Thyroid gland (tissue), 4 donors: ENCODE measurements at regions of chr19 and their contacts with region 1.

Region 1: DNA sequence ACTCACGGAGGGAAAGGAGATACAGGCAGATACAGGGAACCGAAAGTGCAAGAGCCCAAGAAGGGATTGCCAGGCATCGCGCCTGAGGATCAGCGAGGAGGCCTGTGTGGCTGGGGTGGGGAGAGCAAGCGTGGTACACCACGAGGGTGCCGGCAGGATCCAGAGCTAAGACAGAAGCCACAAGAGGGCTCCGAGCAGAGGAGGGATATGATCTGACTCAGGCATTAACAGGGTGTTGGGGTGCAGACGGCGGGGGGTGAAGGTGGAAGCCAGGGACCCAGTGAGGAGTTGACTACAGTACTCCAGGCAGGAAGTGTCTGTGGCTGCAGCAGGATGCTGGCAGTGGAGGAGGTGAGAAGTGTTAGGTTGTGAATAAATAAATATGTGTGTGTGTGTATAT is 5.4 kb upstream of the PPP1R37 start:
- DNase-seq: no peak
- H3K4me3 ChIP-seq: no peak overlapping the region
- H3K27ac ChIP-seq: no peak overlapping the region
- H3K4me1 ChIP-seq: peaks cover 5 to 7% of the 10 kb centered on the region in 2 donors
- H3K27me3 ChIP-seq: no peaks in the 10 kb centered on the region
- CTCF ChIP-seq: no peak
- POLR2A ChIP-seq: no peak

Region 2: DNA sequence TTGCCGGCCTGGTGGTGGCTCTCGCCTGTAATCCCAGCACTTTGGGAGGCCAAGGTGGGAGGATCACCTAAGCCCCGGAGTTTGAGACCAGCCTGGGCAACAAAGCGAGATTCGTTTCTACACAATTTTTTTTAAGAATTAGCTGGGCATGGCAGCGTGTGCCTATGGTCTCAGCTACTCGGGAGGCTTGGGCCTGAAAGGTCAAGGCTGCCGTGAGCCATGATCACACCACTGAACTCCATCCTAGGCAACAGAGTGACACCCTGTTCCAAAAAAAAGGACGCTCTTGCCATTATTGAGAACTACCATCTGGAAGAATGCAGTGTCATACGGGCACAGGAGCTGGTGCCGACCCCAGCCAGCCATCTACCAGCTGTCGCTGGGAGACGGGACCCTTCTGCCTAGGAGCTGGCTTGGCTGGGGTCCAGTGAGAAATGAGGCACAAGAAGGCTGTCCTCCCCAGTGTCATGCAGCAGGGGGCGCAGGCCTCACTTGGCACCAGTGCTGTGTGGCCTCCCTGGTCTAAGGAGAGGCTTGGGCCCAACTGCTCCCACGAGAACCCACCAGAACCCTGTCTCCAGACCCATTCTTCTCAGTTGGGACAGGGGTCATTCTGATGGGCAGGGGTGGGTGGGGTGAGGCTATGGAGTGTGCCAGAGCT is 98.5 kb before region 1 on chr19:
- intact Hi-C with region 1: no loop called
- DNase-seq: peak; percentile 45 to 57
- H3K4me3 ChIP-seq: no peak overlapping the region
- H3K27ac ChIP-seq: no peak overlapping the region
- H3K4me1 ChIP-seq: no peaks in the 10 kb centered on the region
- H3K27me3 ChIP-seq: no peaks in the 10 kb centered on the region
- CTCF ChIP-seq: peak in 4 of 6 experiments; percentile 11 to 46 (median 36)
- POLR2A ChIP-seq: no peak

Region 3: GRCh38 chr19:45038931-45039893 is 48.3 kb before region 1 on chr19 and contains the start of gene CLASRP:
- intact Hi-C with region 1: no loop called
- DNase-seq: peak; percentile 89 to 90
- H3K4me3 ChIP-seq: peak within 1 kb of the TSS; percentile 34 to 75 (median 57)
- H3K27ac ChIP-seq: peak within 1 kb of the TSS; percentile 53 to 88 (median 71)
- H3K4me1 ChIP-seq: peaks cover 12 to 26% of the 10 kb centered on the region in 2 donors
- H3K27me3 ChIP-seq: no peaks in the 10 kb centered on the region
- CTCF ChIP-seq: no peak
- POLR2A ChIP-seq: peak; percentile 82 to 88
- total RNA-seq, gene CLASRP: 48.2 to 96.8 (median 95.0) TPM

Region 4: GRCh38 chr19:45180936-45181335 is 93.4 kb after region 1 on chr19:
- intact Hi-C with region 1: loop called (anchors 2 kb)
- DNase-seq: no peak
- H3K4me3 ChIP-seq: no peak overlapping the region
- H3K27ac ChIP-seq: no peak overlapping the region
- H3K4me1 ChIP-seq: peaks cover 15 to 25% of the 10 kb centered on the region in 2 donors
- H3K27me3 ChIP-seq: no peaks in the 10 kb centered on the region
- CTCF ChIP-seq: no peak
- POLR2A ChIP-seq: no peak